ENCODE measurements at regions of chr1 and their contacts with region 1.

Region 1: GRCh38 chr1:50720457-50721053 is 239.5 kb downstream of the FAF1 start:
- DNase-seq: no peak
- ATAC-seq: no peak
- H3K4me3 ChIP-seq: no peak overlapping the region
- H3K4me3 Mint-ChIP-seq: no peak overlapping the region
- H3K27ac ChIP-seq: no peak overlapping the region
- H3K27ac Mint-ChIP-seq: no peak overlapping the region
- H3K4me1 ChIP-seq: peaks cover 0 to 14% of the 10 kb centered on the region in 2 experiments
- H3K4me1 Mint-ChIP-seq: peaks cover 10 to 26% (median 17%) of the 10 kb centered on the region in 3 donors
- H3K27me3 ChIP-seq: no peaks in the 10 kb centered on the region
- H3K27me3 Mint-ChIP-seq: no peaks in the 10 kb centered on the region

Region 2: DNA sequence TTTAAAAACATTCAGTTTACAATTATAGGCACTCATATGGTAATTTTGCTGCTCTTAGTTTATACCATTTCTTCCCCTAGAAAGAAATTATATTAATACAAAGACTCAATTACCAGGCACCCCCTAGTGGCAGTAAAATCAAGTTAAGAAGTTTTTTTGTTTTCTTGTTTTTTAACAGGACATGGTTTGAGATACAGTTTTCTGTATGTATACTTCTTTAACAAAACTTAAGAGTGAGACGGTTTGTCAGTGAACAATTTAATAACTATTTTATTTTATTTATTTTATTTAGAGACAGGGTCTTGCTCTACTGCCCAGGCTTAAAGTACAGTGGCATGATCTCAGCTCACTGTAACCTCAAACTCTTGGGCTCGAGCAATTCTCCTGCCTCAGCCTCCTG is 14.9 kb after region 1 on chr1:
- CTCF ChIA-PET with region 1: no interaction called
- POLR2A ChIA-PET with region 1: no interaction called
- DNase-seq: peak in 1 of 35 experiments; percentile 11
- ATAC-seq: no peak
- H3K4me3 ChIP-seq: no peak overlapping the region
- H3K4me3 Mint-ChIP-seq: no peak overlapping the region
- H3K27ac ChIP-seq: no peak overlapping the region
- H3K27ac Mint-ChIP-seq: no peak overlapping the region
- H3K4me1 ChIP-seq: no peaks in the 10 kb centered on the region
- H3K4me1 Mint-ChIP-seq: peaks cover 2 to 15% (median 6%) of the 10 kb centered on the region in 3 donors
- H3K27me3 ChIP-seq: no peaks in the 10 kb centered on the region
- H3K27me3 Mint-ChIP-seq: no peaks in the 10 kb centered on the region

Region 3: GRCh38 chr1:50783286-50783685 is 62.7 kb after region 1 on chr1:
- CTCF ChIA-PET with region 1: interaction called in 1 of 2 experiments, 13 read pairs
- POLR2A ChIA-PET with region 1: no interaction called
- DNase-seq: no peak
- ATAC-seq: no peak
- H3K4me3 ChIP-seq: no peak overlapping the region
- H3K4me3 Mint-ChIP-seq: peak overlapping the region in 1 of 3 donors; percentile 2
- H3K27ac ChIP-seq: no peak overlapping the region
- H3K27ac Mint-ChIP-seq: no peak overlapping the region
- H3K4me1 ChIP-seq: peaks cover 0 to 3% of the 10 kb centered on the region in 2 experiments
- H3K4me1 Mint-ChIP-seq: peaks cover 31 to 36% (median 36%) of the 10 kb centered on the region in 3 donors
- H3K27me3 ChIP-seq: no peaks in the 10 kb centered on the region
- H3K27me3 Mint-ChIP-seq: no peaks in the 10 kb centered on the region

Measured in T-cell (primary cell).